ENCODE measurements at regions of chr5 and their contacts with region 1.

Region 1: DNA sequence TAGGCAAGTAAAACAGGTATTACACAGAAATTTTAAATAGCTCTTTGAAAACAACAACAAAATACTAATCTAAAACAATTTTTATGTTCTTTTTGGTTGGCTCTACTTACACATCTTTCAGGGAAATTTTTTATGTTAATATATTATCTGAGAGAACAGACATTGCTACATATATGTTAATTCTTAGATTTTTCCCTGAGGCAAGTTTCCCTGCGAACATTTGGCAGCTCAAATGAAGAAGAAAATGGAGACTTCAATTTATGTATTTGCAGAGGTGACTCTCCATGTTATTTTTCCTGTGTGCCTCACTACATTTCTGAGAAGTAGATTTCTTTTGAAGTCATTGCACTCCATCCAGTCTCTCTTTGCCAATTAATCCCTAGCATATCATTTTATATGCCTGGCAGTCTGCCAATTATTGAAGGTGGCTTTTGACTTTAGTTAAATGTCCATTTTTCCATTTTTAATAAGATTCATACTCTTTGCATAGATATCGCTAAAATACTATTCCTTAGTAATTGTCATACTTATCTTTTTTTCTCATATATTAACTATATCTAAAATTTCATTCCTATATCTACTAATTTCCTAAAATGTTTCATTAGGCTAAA is 908.2 kb upstream of the CDH10 start:
- DNase-seq: no peak
- ATAC-seq: no peak
- H3K4me3 ChIP-seq: no peak overlapping the region
- H3K27ac ChIP-seq: no peak overlapping the region
- H3K4me1 ChIP-seq: no peaks in the 10 kb centered on the region
- H3K27me3 ChIP-seq: no peaks in the 10 kb centered on the region

Region 2: DNA sequence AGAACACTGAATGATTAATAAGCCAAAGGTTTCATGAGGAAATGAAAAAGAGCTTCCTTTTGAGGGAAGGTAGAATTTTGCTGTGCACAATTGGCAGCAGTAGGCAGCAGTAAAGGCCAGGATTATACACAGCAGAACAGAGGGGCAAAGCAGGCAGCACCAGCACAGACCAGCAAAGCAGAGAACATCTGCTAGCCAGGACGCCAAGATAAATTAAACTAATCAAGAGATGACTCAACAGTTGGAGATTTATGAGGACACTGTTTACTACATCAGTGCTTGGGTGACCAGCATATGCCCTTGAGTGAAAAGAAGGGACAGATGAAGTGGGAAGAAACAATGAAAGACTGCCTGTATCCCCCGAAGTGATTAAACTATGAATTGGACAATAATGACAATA is 36.8 kb before region 1 on chr5:
- intact Hi-C with region 1: loop called in 1 of 4 experiments (anchors 2 kb)
- DNase-seq: no peak
- ATAC-seq: no peak
- H3K4me3 ChIP-seq: no peak overlapping the region
- H3K27ac ChIP-seq: no peak overlapping the region
- H3K4me1 ChIP-seq: no peaks in the 10 kb centered on the region
- H3K27me3 ChIP-seq: no peaks in the 10 kb centered on the region

Measured in right cardiac atrium (tissue), 5 donors.